ENCODE measurements at regions of chr11 and their contacts with region 1.

Region 1: GRCh38 chr11:95699631-95700470 is 89.7 kb downstream of the FAM76B start:
- DNase-seq: no peak
- H3K4me3 ChIP-seq: no peak overlapping the region
- H3K27ac ChIP-seq: no peak overlapping the region
- H3K4me1 ChIP-seq: peaks cover 11% of the 10 kb centered on the region
- H3K27me3 ChIP-seq: no peaks in the 10 kb centered on the region
- CTCF ChIP-seq: no peak
- EP300 ChIP-seq: no peak
- POLR2A ChIP-seq: no peak

Region 2: GRCh38 chr11:95156916-95157541 is 542.8 kb before region 1 on chr11:
- intact Hi-C with region 1: loop called in 3 of 4 experiments (anchors 5 kb)
- DNase-seq: peak; percentile 60 to 79 (median 69)
- H3K4me3 ChIP-seq: no peak overlapping the region
- H3K27ac ChIP-seq: peak overlapping the region in 1 of 2 donors; percentile 72
- H3K4me1 ChIP-seq: peaks cover 13% of the 10 kb centered on the region
- H3K27me3 ChIP-seq: no peaks in the 10 kb centered on the region
- CTCF ChIP-seq: no peak
- EP300 ChIP-seq: no peak
- POLR2A ChIP-seq: no peak

Region 3: DNA sequence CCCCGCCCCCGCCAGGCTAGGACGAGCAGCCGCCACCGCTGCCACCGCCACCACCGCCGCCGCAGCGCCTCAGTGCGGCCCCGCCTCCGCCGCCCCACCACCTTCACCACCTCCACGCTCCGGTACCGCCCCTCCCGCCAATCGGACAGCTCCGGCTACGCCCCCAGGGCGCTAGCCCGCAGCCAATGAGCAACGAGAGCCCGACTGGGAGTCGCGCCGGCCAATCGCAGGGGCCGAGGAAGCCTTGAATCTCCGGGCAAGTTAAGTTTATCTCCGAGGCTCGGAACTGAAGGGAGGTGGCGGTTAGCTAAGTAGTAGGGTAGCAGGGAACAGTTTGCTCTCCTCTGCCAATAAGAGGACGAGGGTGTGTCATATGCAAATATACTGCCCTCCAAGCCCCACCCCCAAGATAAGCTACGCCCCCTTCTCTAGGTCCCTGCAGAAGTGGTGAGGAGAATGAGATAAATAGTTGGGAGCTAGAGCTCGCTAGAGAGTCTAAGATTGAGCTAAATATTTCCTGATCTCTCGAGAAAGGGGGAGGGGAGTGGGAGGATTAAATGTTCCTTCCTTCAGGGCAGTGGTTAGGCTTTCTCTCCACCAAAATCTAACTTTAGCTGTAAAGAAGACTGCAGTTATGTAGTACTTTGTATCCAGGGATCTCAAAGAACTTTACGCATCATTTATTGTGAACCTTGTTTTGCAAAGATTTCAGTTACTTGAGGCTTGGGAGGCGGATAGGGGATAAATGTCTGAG is 468.5 kb before region 1 on chr11 and contains the start of gene SESN3:
- intact Hi-C with region 1: loop called in 2 of 4 experiments (anchors 5 to 10 kb)
- DNase-seq: peak; percentile 98 to 99 (median 98)
- H3K4me3 ChIP-seq: peak within 1 kb of the TSS; percentile 89
- H3K27ac ChIP-seq: peak within 1 kb of the TSS; percentile 89 to 90
- H3K4me1 ChIP-seq: peaks cover 3% of the 10 kb centered on the region
- H3K27me3 ChIP-seq: no peaks in the 10 kb centered on the region
- CTCF ChIP-seq: peak in 2 of 3 donors; percentile 23 to 34
- EP300 ChIP-seq: no peak
- POLR2A ChIP-seq: peak; percentile 73
- total RNA-seq, gene SESN3: 37.1 to 77.3 (median 49.4) TPM

Region 4: GRCh38 chr11:95337175-95337957 is 362.5 kb before region 1 on chr11:
- intact Hi-C with region 1: loop called in 2 of 4 experiments (anchors 5 kb)
- DNase-seq: peak; percentile 58 to 80 (median 72)
- H3K4me3 ChIP-seq: no peak overlapping the region
- H3K27ac ChIP-seq: peak overlapping the region; percentile 46 to 85
- H3K4me1 ChIP-seq: peaks cover 16% of the 10 kb centered on the region
- H3K27me3 ChIP-seq: no peaks in the 10 kb centered on the region
- CTCF ChIP-seq: no peak
- EP300 ChIP-seq: no peak
- POLR2A ChIP-seq: no peak

Region 5: GRCh38 chr11:95512682-95513081 is 187.2 kb before region 1 on chr11:
- intact Hi-C with region 1: loop called in 1 of 4 experiments (anchors 10 kb)
- DNase-seq: peak; percentile 63 to 84 (median 72)
- H3K4me3 ChIP-seq: no peak overlapping the region
- H3K27ac ChIP-seq: peak overlapping the region in 1 of 2 donors; percentile 66
- H3K4me1 ChIP-seq: peaks cover 6% of the 10 kb centered on the region
- H3K27me3 ChIP-seq: no peaks in the 10 kb centered on the region
- CTCF ChIP-seq: no peak
- EP300 ChIP-seq: no peak
- POLR2A ChIP-seq: no peak